HepG2 (cell line): ENCODE measurements at regions of chr16 and their contacts with region 1.

Region 1: DNA sequence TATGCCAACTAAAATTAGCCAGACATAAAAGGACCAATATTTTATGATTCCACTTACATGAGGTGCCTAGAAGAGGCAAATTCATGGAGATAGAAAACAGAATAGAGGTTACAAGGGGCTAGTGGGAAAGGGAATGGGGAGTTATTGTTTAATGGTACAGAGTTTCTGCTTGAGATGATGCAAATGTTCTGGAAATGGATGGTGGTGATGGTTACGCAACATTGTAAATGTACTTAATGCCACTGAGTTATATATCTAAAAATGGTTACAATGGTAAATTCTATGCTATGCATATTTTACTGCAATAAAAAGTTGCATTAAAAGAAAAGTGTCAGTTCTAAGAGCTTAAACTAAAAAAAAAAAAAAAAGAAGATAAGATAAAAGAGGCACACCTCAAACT is 17.9 kb downstream of the MT1X start:
- DNase-seq: no peak
- ATAC-seq: no peak
- H3K4me3 ChIP-seq: no peak overlapping the region
- H3K27ac ChIP-seq: no peak overlapping the region
- H3K4me1 ChIP-seq: peaks cover 8% of the 10 kb centered on the region; the same call in 1 of the 2 replicates
- H3K27me3 ChIP-seq: peaks cover 0 to 12% of the 10 kb centered on the region in 2 experiments; a peak in 2 of 5 replicates
- CTCF ChIP-seq: no peak
- EP300 ChIP-seq: no peak
- POLR2A ChIP-seq: no peak
- RAD21 ChIP-seq: no peak

Region 2: DNA sequence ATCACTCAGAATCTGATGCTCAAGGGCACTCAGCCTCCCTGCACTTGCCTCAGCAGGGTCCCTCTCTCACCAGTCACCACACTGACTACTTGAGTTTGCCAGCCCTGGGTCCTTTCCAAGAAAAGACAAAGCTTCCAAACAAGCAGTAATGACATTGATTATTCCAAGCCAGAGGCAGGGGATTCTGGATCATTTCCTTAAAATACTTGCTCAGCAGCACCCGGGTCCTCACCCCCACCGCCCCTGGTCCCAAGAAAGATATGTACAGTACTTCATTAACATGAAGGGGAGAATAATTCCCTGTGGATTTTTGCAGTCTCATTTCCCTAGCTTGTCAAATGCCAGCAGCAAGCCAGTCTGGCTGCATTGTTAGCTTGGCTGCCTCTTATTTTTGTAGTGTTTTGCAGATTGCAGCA is 592.1 kb before region 1 on chr16:
- CTCF ChIA-PET with region 1: no interaction called
- POLR2A ChIA-PET with region 1: no interaction called
- in situ Hi-C with region 1: no loop called
- intact Hi-C with region 1: loop called (anchors 5 kb)
- DNase-seq: no peak
- ATAC-seq: no peak
- H3K4me3 ChIP-seq: no peak overlapping the region
- H3K27ac ChIP-seq: no peak overlapping the region
- H3K4me1 ChIP-seq: no peaks in the 10 kb centered on the region
- H3K27me3 ChIP-seq: 0 out of 5 replicates have a peak, but pooled peaks cover 0 to 1% of the 10 kb centered on the region in 2 experiments
- CTCF ChIP-seq: no peak
- EP300 ChIP-seq: no peak
- POLR2A ChIP-seq: no peak
- RAD21 ChIP-seq: no peak

Region 3: GRCh38 chr16:56513972-56514371 is 186.2 kb before region 1 on chr16:
- CTCF ChIA-PET with region 1: interaction called, 21 read pairs
- POLR2A ChIA-PET with region 1: no interaction called
- in situ Hi-C with region 1: loop called (anchors 10 kb)
- intact Hi-C with region 1: loop called (anchors 1 kb)
- DNase-seq: peak; percentile 80
- ATAC-seq: peak; percentile 93
- H3K4me3 ChIP-seq: no peak overlapping the region
- H3K27ac ChIP-seq: no peak overlapping the region
- H3K4me1 ChIP-seq: peaks cover 19% of the 10 kb centered on the region
- H3K27me3 ChIP-seq: no peaks in the 10 kb centered on the region
- CTCF ChIP-seq: peak; percentile 77
- EP300 ChIP-seq: no peak
- POLR2A ChIP-seq: no peak
- RAD21 ChIP-seq: peak; percentile 84

Region 4: GRCh38 chr16:56600398-56600999 is 99.7 kb before region 1 on chr16:
- CTCF ChIA-PET with region 1: interaction called, 28 read pairs
- POLR2A ChIA-PET with region 1: interaction called, 7 read pairs
- in situ Hi-C with region 1: loop called (anchors 5 kb)
- intact Hi-C with region 1: loop called (anchors 1 kb)
- DNase-seq: peak; percentile 59
- ATAC-seq: peak; percentile 72
- H3K4me3 ChIP-seq: no peak overlapping the region
- H3K27ac ChIP-seq: no peak overlapping the region
- H3K4me1 ChIP-seq: peaks cover 19% of the 10 kb centered on the region
- H3K27me3 ChIP-seq: peaks cover 0 to 7% of the 10 kb centered on the region in 2 experiments; a peak in 2 of 5 replicates
- CTCF ChIP-seq: peak; percentile 85
- EP300 ChIP-seq: no peak
- POLR2A ChIP-seq: no peak
- RAD21 ChIP-seq: peak; percentile 43; the same call in 1 of the 2 replicates

Region 5: DNA sequence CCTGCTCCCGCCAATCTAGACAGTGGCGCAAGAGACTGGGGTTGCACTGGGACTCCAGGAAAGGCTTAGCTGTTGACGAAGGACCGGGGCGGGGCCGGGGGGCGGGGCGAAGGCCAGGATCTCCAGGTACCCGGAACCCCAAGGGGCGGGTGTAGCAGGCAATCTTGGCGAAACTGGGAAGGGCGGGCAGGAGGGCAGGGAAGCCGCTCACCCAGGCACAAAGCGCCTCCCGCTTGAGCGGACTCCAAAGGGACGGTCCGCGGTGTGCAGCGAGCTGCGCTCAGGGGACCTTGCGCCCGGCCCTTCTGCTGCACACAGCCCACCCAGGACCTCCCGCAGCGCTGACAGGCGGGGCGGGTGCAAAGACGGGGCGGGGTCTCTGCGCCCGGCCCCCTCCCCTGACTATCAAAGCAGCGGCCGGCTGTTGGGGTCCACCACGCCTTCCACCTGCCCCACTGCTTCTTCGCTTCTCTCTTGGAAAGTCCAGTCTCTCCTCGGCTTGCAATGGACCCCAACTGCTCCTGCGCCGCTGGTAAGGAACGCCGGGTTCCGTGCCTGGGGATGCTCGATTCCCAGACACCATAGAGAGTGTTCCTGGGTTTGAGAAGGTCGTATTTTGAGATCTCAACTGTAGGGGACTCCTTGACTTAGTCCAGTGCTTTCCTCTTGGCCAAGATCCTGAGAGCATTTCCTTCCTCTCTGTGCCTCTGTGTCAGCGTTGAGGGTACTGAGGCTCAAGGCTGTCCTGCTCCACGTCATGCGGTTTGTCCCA is 42.5 kb before region 1 on chr16 and contains the start of gene MT1F:
- CTCF ChIA-PET with region 1: no interaction called
- POLR2A ChIA-PET with region 1: no interaction called
- in situ Hi-C with region 1: no loop called
- intact Hi-C with region 1: loop called (anchors 5 kb)
- DNase-seq: peak; percentile 85
- ATAC-seq: peak; percentile 92
- H3K4me3 ChIP-seq: peak within 1 kb of the TSS; percentile 77 to 82 (median 78)
- H3K27ac ChIP-seq: no peak within 1 kb of the TSS
- H3K4me1 ChIP-seq: peaks cover 20% of the 10 kb centered on the region
- H3K27me3 ChIP-seq: peaks cover under 1 to 4% of the 10 kb centered on the region in 2 experiments; a peak in 2 of 5 replicates
- CTCF ChIP-seq: peak; percentile 45
- EP300 ChIP-seq: no peak
- POLR2A ChIP-seq: peak; percentile 38 to 75
- RAD21 ChIP-seq: no peak
- total RNA-seq, gene MT1F: 169 and 211 TPM in 2 replicates

Region 6: DNA sequence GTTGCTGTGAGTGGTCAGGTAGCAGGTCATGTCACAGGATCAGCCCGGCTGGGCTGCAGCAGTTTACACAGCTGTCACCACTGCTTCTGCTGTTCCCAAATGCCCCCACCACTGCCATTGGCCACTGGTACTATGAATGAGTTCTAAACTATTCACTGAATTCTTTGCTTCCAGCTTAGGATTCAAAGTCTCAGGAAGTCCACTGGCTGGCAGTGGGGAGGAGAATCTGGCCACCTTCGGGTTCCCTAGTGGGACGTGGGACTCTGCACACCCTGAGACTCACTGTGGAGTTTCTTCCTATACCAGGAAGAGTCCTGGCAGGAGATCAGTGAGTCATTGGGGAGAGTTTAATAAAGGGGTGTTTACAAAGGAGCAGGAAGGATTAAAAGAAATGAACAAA is 11.0 kb before region 1 on chr16:
- CTCF ChIA-PET with region 1: no interaction called
- POLR2A ChIA-PET with region 1: no interaction called
- in situ Hi-C with region 1: no loop called
- intact Hi-C with region 1: no loop called
- DNase-seq: no peak
- ATAC-seq: peak; percentile 66
- H3K4me3 ChIP-seq: no peak overlapping the region
- H3K27ac ChIP-seq: no peak overlapping the region
- H3K4me1 ChIP-seq: peaks cover 26% of the 10 kb centered on the region
- H3K27me3 ChIP-seq: no peaks in the 10 kb centered on the region
- CTCF ChIP-seq: no peak
- EP300 ChIP-seq: no peak
- POLR2A ChIP-seq: no peak
- RAD21 ChIP-seq: no peak

Region 7: DNA sequence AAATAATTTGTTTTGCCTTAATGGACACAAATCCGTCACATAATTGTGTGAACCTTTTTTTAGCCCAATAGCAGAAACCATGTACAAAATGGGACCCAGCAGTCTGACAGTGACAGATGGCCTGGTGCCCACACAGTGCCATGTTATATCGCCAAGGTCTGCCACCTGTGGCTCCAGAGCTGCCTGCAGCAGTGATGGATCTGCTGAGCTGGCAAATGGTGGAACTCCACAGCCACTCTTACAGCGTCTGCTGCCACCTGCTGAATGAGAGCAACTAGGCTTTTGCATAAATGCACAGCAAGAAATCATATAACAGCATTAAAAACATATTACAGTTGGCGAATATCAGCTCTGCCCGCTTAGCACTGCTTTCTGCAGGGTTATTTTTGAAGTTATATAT is 89.2 kb after region 1 on chr16:
- CTCF ChIA-PET with region 1: no interaction called
- POLR2A ChIA-PET with region 1: no interaction called
- in situ Hi-C with region 1: no loop called
- intact Hi-C with region 1: no loop called
- DNase-seq: peak; percentile 69
- ATAC-seq: peak; percentile 88
- H3K4me3 ChIP-seq: no peak overlapping the region
- H3K27ac ChIP-seq: no peak overlapping the region
- H3K4me1 ChIP-seq: peaks cover 13% of the 10 kb centered on the region; the same call in 1 of the 2 replicates
- H3K27me3 ChIP-seq: no peaks in the 10 kb centered on the region
- CTCF ChIP-seq: peak; percentile 74
- EP300 ChIP-seq: no peak
- POLR2A ChIP-seq: no peak
- RAD21 ChIP-seq: peak; percentile 79